Heart right ventricle (tissue), 16 donors: ENCODE measurements at regions of chr20 and their contacts with region 1.

Region 1: GRCh38 chr20:17682103-17682888 is at the start of gene RRBP1:
- DNase-seq: peak; percentile 98 to 99
- ATAC-seq: peak; percentile 95 to 99 (median 98)
- H3K4me3 ChIP-seq: peak within 1 kb of the TSS; percentile 65 to 87 (median 82)
- H3K27ac ChIP-seq: peak within 1 kb of the TSS; percentile 73 to 100 (median 94)
- H3K4me1 ChIP-seq: peaks cover 6 to 38% (median 17%) of the 10 kb centered on the region in 9 donors
- H3K27me3 ChIP-seq: peaks cover 0 to 5% (median 0%) of the 10 kb centered on the region in 7 donors
- CTCF ChIP-seq: peak; percentile 38 to 82 (median 65)
- total RNA-seq, gene RRBP1: 23.5 to 71.3 (median 29.0) TPM

Region 2: DNA sequence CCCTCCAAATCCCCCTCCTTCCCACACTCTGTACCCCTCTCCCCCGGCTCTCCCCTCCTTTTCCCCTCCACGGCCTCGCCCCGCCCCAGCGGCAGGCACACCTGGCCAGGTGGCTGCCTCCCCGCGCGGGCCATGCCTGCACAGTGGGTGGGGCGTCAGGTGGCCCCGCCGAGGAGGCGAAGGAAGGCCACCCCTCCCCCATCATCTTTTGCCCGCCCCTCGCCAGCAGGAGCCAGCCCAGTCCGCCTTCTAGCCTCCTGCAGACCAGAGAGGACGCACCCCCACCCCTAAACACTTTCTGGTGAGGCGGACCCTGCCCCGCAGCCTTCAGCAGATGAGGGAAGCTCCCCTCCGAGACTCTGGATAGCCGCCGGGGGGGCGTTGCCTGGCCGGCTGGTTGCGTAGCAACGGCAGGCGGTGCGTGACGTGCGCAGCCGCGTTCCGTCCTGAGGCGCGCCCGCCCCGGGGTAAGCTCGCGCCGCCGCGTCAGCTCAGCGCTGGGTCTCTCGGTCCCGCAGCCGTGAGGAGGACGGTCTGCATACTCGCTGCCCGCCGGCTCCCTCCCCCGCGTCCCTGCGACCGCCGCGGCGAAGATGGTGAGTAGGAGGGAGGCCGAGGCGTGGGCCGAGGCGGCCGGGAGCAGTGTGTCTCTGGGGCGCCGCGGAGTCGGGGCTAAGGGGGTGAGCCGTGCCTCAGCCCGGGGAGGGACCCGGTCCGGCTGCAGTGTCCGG is 112.5 kb before region 1 on chr20 and contains the start of gene DSTN:
- intact Hi-C with region 1: loop called in 1 of 10 experiments (anchors 5 kb)
- DNase-seq: peak; percentile 92 to 94
- ATAC-seq: peak; percentile 91 to 96 (median 94)
- H3K4me3 ChIP-seq: peak within 1 kb of the TSS; percentile 81 to 99 (median 96)
- H3K27ac ChIP-seq: peak within 1 kb of the TSS; percentile 95 to 100 (median 99)
- H3K4me1 ChIP-seq: peaks cover 4 to 55% (median 49%) of the 10 kb centered on the region in 9 donors
- H3K27me3 ChIP-seq: no peaks in the 10 kb centered on the region
- CTCF ChIP-seq: no peak
- total RNA-seq, gene DSTN: 353 to 802 (median 569) TPM

Region 3: GRCh38 chr20:17611540-17612286 is 70.6 kb before region 1 on chr20:
- intact Hi-C with region 1: no loop called
- DNase-seq: no peak
- ATAC-seq: peak in 5 of 8 donors; percentile 2 to 18 (median 5)
- H3K4me3 ChIP-seq: no peak overlapping the region
- H3K27ac ChIP-seq: peak overlapping the region in 9 of 10 donors; percentile 42 to 66 (median 56)
- H3K4me1 ChIP-seq: peaks cover 32 to 69% (median 53%) of the 10 kb centered on the region in 9 donors
- H3K27me3 ChIP-seq: no peaks in the 10 kb centered on the region
- CTCF ChIP-seq: peak in 3 of 9 donors; percentile 3 to 38 (median 30)

Region 4: DNA sequence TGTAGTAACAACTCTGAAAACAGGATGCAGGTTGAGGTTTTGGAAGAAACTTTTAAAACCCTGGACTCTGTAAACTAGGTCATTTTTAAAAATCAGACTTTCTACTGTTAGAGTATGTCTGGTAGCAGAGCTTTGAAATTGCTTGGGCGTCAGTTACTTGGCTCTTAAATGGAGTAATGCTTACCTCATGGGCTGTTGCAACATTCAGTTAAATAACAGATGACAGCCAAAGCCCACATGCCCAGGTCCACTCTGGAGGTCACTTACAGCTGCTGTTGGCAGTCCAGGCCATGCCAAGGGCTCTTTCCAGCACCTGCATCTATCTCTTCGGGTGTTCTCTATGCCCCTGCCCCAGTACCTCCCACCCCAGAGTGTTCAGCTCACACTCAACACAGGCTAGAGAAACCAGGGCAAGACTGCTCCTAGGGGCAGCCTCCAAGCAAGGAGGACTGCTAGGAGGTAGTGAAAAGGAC is 113.8 kb after region 1 on chr20:
- intact Hi-C with region 1: loop called in 1 of 10 experiments (anchors 5 kb)
- DNase-seq: peak; percentile 39 to 46
- ATAC-seq: peak; percentile 75 to 93 (median 86)
- H3K4me3 ChIP-seq: no peak overlapping the region
- H3K27ac ChIP-seq: peak overlapping the region in 9 of 10 donors; percentile 2 to 86 (median 70)
- H3K4me1 ChIP-seq: peaks cover 0 to 27% (median 19%) of the 10 kb centered on the region in 9 donors
- H3K27me3 ChIP-seq: no peaks in the 10 kb centered on the region
- CTCF ChIP-seq: no peak

Region 5: GRCh38 chr20:17835240-17835935 is 153.1 kb after region 1 on chr20:
- intact Hi-C with region 1: loop called in 1 of 10 experiments (anchors 5 kb)
- DNase-seq: peak; percentile 49 to 55
- ATAC-seq: peak; percentile 14 to 81 (median 56)
- H3K4me3 ChIP-seq: no peak overlapping the region
- H3K27ac ChIP-seq: peak overlapping the region; percentile 69 to 96 (median 87)
- H3K4me1 ChIP-seq: peaks cover 6 to 34% (median 28%) of the 10 kb centered on the region in 9 donors
- H3K27me3 ChIP-seq: no peaks in the 10 kb centered on the region
- CTCF ChIP-seq: no peak

Region 6: DNA sequence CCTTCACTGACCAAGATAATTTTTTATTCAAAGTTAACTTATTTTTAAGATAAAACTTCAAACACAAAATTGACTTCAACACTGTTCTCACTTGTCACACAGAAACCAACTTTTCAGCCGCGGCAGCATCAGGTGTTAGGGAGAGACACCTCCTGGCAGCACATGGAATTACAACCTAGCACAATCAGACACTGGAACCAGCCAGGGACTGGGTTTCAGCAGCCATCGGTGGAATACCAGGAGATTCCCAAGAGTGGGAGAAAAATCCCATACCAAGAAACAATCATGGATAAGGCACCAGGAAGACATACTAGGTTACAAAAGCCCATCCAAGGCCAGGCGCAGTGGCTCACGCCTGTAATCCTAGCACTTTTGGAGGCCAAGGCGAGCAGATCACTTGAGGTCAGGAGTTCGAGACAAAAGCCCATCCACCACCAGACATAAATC is 216.3 kb after region 1 on chr20:
- intact Hi-C with region 1: loop called (anchors 1 to 10 kb)
- DNase-seq: peak; percentile 41 to 75
- ATAC-seq: peak in 5 of 8 donors; percentile 36 to 54 (median 42)
- H3K4me3 ChIP-seq: no peak overlapping the region
- H3K27ac ChIP-seq: no peak overlapping the region
- H3K4me1 ChIP-seq: peaks cover 6 to 44% (median 35%) of the 10 kb centered on the region in 9 donors
- H3K27me3 ChIP-seq: no peaks in the 10 kb centered on the region
- CTCF ChIP-seq: peak; percentile 83 to 97 (median 95)

Region 7: DNA sequence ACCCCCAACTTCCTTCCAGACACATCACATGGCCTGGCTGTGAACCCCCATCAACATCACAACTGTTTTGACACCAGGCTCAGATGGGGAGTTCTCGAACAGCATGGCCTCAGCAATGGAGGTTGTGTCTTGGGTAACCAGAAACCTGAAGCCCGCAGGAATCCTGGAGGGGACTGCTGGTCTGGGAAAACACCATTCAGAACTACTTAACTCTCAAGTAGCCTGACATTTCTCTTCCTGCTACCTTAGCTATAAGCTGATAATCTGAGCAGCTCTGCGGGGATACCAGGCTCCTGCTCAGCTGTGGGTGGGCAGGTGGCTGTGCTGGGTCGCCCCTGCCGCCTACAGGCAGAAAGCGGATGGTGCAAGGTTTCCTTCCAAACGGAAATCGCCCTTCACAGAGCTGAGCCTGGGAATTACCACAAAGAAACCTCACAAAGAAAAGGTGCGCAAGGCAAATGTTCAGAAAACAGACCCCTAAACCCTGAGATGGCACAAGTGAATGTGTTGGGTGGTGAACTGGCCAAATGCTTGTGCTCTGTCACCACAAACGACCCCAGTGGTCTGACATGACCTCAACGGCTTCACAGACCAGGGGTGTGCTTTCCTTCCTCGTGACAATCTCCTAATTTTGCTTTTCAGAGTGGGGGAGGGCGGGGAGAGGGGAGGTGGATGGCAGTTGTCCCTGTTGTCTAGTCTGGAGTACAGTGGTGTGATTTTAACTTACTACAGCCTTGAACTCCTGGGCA is 256.7 kb after region 1 on chr20:
- intact Hi-C with region 1: loop called in 1 of 10 experiments (anchors 5 kb)
- DNase-seq: peak; percentile 55 to 57
- ATAC-seq: peak; percentile 63 to 87 (median 76)
- H3K4me3 ChIP-seq: no peak overlapping the region
- H3K27ac ChIP-seq: peak overlapping the region in 2 of 10 donors; percentile 29 to 54
- H3K4me1 ChIP-seq: peaks cover 3 to 54% (median 33%) of the 10 kb centered on the region in 9 donors
- H3K27me3 ChIP-seq: no peaks in the 10 kb centered on the region
- CTCF ChIP-seq: peak; percentile 81 to 94 (median 89)